SK-N-SH (cell line): ENCODE measurements at regions of chr7 and their contacts with region 1.

Region 1: DNA sequence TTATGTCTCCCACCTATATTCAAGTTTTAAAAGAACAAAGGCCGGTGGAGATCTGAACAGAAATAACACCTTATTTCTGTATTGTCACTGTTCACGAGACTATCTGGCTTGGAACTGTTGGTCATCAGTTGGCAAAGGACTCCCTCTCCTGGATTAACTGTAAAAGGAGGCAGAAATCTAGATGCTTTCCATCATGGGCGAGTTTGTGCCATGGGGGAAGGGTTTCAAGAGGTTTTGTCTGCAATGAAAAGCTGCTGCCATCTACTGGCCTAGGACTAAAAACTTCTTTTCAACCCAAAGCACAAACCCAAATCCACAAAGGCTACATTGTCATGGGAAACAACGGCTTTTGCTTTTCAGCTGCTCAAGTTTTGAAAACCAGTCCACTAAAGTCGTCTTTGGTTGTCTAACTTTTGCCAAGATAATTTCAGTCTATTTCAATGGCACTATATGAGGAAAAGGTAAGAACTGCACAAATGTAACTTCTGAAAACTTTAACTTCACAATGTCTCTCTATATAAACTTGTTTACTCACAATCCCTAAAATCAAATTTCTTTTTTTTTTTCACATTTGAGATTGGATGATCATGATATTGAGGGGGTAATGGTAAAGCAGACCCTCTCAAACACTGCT is 196.8 kb downstream of the SKAP2 start:
- DNase-seq: peak; percentile 71
- H3K4me3 ChIP-seq: peak overlapping the region in 1 of 2 experiments; percentile 21; a peak in 1 of 4 replicates
- H3K27ac ChIP-seq: no peak overlapping the region
- H3K4me1 ChIP-seq: peaks cover 0 to 3% of the 10 kb centered on the region in 2 experiments; a peak in 1 of 4 replicates
- H3K27me3 ChIP-seq: no peaks in the 10 kb centered on the region; the same call in 1 of the 2 replicates
- CTCF ChIP-seq: peak; percentile 98
- EP300 ChIP-seq: peak in 1 of 2 experiments; percentile 53; a peak in 1 of 4 replicates
- RAD21 ChIP-seq: peak; percentile 100

Region 2: DNA sequence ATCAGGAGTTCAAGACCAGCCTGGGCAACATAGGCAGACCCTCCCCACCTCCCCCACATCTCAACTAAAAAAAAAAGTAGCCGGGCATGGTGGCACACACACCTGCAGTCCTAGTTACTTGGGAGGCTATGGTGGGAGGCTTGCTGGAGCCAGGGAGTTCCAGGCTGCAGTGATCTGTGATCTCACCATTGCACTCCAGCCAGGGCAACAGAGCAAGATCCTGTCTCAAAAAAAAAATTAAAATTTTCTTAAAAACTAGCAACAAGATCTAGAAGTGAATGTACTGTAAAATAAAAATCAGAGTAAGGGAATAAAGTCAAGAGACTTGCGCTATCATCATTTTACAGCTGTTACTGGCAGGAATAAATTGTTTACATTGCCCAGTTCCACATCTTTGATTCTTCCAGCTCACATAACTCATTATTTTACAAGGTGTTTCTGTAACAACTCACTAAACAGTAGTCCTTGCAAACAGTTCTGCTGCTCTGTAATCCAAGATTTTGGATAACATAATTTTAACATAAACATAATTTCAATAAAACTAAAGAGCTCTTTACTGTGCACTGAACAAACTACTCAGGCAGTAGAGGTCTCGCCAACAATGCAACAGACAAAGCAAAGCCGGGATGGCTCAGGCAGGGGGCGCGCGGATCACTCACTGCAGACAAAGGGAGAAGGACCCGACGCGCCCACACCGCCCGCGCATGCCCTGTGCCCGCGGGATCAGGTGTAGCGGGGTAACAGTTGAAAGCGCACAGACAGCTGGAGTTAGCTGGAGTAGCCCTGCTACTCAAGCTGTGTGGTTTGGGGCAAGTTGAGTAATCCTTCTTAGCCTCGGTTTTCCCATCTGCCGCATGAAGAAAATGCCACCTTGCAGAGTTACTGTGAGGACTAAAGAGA is 588.9 kb before region 1 on chr7:
- CTCF ChIA-PET with region 1: interaction called, 19 read pairs
- POLR2A ChIA-PET with region 1: no interaction called
- DNase-seq: peak; percentile 90
- H3K4me3 ChIP-seq: peak overlapping the region in 1 of 2 experiments; percentile 19; a peak in 1 of 4 replicates
- H3K27ac ChIP-seq: no peak overlapping the region
- H3K4me1 ChIP-seq: peaks cover 3 to 7% of the 10 kb centered on the region in 2 experiments; a peak in 2 of 4 replicates
- H3K27me3 ChIP-seq: peaks cover 46% of the 10 kb centered on the region; the same call in 1 of the 2 replicates
- CTCF ChIP-seq: peak; percentile 67
- EP300 ChIP-seq: no peak
- RAD21 ChIP-seq: peak; percentile 73

Region 3: GRCh38 chr7:26381476-26382353 is 285.9 kb before region 1 on chr7:
- CTCF ChIA-PET with region 1: interaction called, 716 read pairs
- POLR2A ChIA-PET with region 1: no interaction called
- DNase-seq: no peak
- H3K4me3 ChIP-seq: no peak overlapping the region
- H3K27ac ChIP-seq: no peak overlapping the region
- H3K4me1 ChIP-seq: peaks cover 0 to 3% of the 10 kb centered on the region in 2 experiments; a peak in 2 of 4 replicates
- H3K27me3 ChIP-seq: peaks cover 18% of the 10 kb centered on the region
- CTCF ChIP-seq: no peak
- EP300 ChIP-seq: no peak
- RAD21 ChIP-seq: no peak

Region 4: GRCh38 chr7:26490650-26491624 is 176.7 kb before region 1 on chr7:
- CTCF ChIA-PET with region 1: interaction called, 12 read pairs
- POLR2A ChIA-PET with region 1: no interaction called
- DNase-seq: peak; percentile 55
- H3K4me3 ChIP-seq: no peak overlapping the region
- H3K27ac ChIP-seq: no peak overlapping the region
- H3K4me1 ChIP-seq: peaks cover 0 to 27% of the 10 kb centered on the region in 2 experiments; a peak in 2 of 4 replicates
- H3K27me3 ChIP-seq: no peaks in the 10 kb centered on the region
- CTCF ChIP-seq: no peak
- EP300 ChIP-seq: no peak
- RAD21 ChIP-seq: no peak

Region 5: DNA sequence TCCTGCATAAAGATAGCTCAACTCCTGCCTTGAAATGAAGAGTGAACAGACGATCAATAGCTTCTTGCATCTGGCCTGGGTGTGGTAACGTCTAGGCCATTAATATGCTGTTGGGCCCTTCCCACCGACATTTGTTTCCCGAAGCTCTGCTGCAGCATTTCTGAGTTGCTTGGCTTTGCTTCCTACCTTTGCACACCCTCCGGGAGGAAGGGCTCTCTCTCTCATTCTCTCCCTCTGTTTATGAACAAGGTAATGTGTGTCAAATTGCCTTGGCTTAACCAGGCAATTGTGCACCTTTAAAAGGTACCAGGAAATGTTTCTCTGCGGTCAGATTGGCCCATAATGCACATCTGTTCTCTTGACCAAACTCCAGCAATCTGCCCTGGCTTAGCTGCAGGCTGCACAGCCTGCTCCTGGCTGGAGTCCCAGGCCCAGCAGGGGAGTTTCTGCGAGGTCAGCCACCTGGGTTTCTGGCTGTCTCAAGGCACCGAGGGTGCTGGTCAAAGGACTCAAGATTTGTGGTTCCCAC is 152.2 kb before region 1 on chr7:
- CTCF ChIA-PET with region 1: interaction called, 13 read pairs
- POLR2A ChIA-PET with region 1: no interaction called
- DNase-seq: peak; percentile 52
- H3K4me3 ChIP-seq: no peak overlapping the region
- H3K27ac ChIP-seq: no peak overlapping the region; a peak in 1 of 4 replicates
- H3K4me1 ChIP-seq: peaks cover 0 to 13% of the 10 kb centered on the region in 2 experiments; a peak in 1 of 4 replicates
- H3K27me3 ChIP-seq: 0 out of 2 replicates have a peak, but pooled peaks cover 9% of the 10 kb centered on the region
- CTCF ChIP-seq: no peak
- EP300 ChIP-seq: no peak
- RAD21 ChIP-seq: no peak

Region 6: GRCh38 chr7:26556071-26556881 is 111.3 kb before region 1 on chr7:
- CTCF ChIA-PET with region 1: interaction called, 34 read pairs
- POLR2A ChIA-PET with region 1: no interaction called
- DNase-seq: peak; percentile 39
- H3K4me3 ChIP-seq: no peak overlapping the region
- H3K27ac ChIP-seq: no peak overlapping the region
- H3K4me1 ChIP-seq: peaks cover 0 to 10% of the 10 kb centered on the region in 2 experiments; a peak in 1 of 4 replicates
- H3K27me3 ChIP-seq: no peaks in the 10 kb centered on the region
- CTCF ChIP-seq: no peak
- EP300 ChIP-seq: no peak
- RAD21 ChIP-seq: no peak

Region 7: GRCh38 chr7:26794541-26794940 is 126.9 kb after region 1 on chr7:
- CTCF ChIA-PET with region 1: no interaction called
- POLR2A ChIA-PET with region 1: no interaction called
- DNase-seq: no peak
- H3K4me3 ChIP-seq: no peak overlapping the region
- H3K27ac ChIP-seq: no peak overlapping the region
- H3K4me1 ChIP-seq: peaks cover 0 to 3% of the 10 kb centered on the region in 2 experiments; a peak in 2 of 4 replicates
- H3K27me3 ChIP-seq: no peaks in the 10 kb centered on the region
- CTCF ChIP-seq: no peak
- EP300 ChIP-seq: no peak
- RAD21 ChIP-seq: no peak

Region 8: GRCh38 chr7:27160546-27161213 is 493.1 kb after region 1 on chr7:
- CTCF ChIA-PET with region 1: interaction called, 17 read pairs
- POLR2A ChIA-PET with region 1: no interaction called
- DNase-seq: peak; percentile 96
- H3K4me3 ChIP-seq: peak overlapping the region; percentile 39 to 70
- H3K27ac ChIP-seq: no peak overlapping the region
- H3K4me1 ChIP-seq: peaks cover 0 to 8% of the 10 kb centered on the region in 2 experiments; a peak in 1 of 4 replicates
- H3K27me3 ChIP-seq: peaks cover 91% of the 10 kb centered on the region
- CTCF ChIP-seq: peak; percentile 99
- EP300 ChIP-seq: no peak
- RAD21 ChIP-seq: peak; percentile 94